ENCODE measurements at regions of chr6 and their contacts with region 1.

Region 1: GRCh38 chr6:188821-189655 is 103.2 kb upstream of the DUSP22 start:
- DNase-seq: peak; percentile 36 to 80 (median 61)
- ATAC-seq: peak; percentile 91
- H3K4me3 ChIP-seq: no peak overlapping the region
- H3K4me3 Mint-ChIP-seq: peak overlapping the region in 1 of 10 donors; percentile 52
- H3K27ac ChIP-seq: no peak overlapping the region
- H3K27ac Mint-ChIP-seq: peak overlapping the region in 2 of 9 donors; percentile 47 to 51
- H3K4me1 ChIP-seq: peaks cover 12 to 25% of the 10 kb centered on the region in 2 donors
- H3K4me1 Mint-ChIP-seq: peaks cover 16 to 38% (median 34%) of the 10 kb centered on the region in 7 donors
- H3K27me3 ChIP-seq: no peaks in the 10 kb centered on the region
- H3K27me3 Mint-ChIP-seq: no peaks in the 10 kb centered on the region

Region 2: GRCh38 chr6:322940-323729 is 134.1 kb after region 1 on chr6:
- CTCF ChIA-PET with region 1: interaction called, 3 read pairs
- POLR2A ChIA-PET with region 1: no interaction called
- intact Hi-C with region 1: loop called in 1 of 2 experiments (anchors 1 kb)
- DNase-seq: no peak
- ATAC-seq: no peak
- H3K4me3 ChIP-seq: no peak overlapping the region
- H3K4me3 Mint-ChIP-seq: no peak overlapping the region
- H3K27ac ChIP-seq: no peak overlapping the region
- H3K27ac Mint-ChIP-seq: no peak overlapping the region
- H3K4me1 ChIP-seq: no peaks in the 10 kb centered on the region
- H3K4me1 Mint-ChIP-seq: peaks cover 0 to 18% (median 7%) of the 10 kb centered on the region in 7 donors
- H3K27me3 ChIP-seq: no peaks in the 10 kb centered on the region
- H3K27me3 Mint-ChIP-seq: no peaks in the 10 kb centered on the region

Region 3: GRCh38 chr6:399785-400534 is 210.9 kb after region 1 on chr6:
- CTCF ChIA-PET with region 1: interaction called, 3 read pairs
- POLR2A ChIA-PET with region 1: interaction called, 4 read pairs
- intact Hi-C with region 1: loop called (anchors 1 kb)
- DNase-seq: peak in 7 of 9 donors; percentile 27 to 66 (median 60)
- ATAC-seq: peak; percentile 76
- H3K4me3 ChIP-seq: no peak overlapping the region
- H3K4me3 Mint-ChIP-seq: peak overlapping the region in 8 of 10 donors; percentile 32 to 78 (median 56)
- H3K27ac ChIP-seq: no peak overlapping the region
- H3K27ac Mint-ChIP-seq: peak overlapping the region; percentile 41 to 84 (median 77)
- H3K4me1 ChIP-seq: peaks cover 8 to 29% of the 10 kb centered on the region in 2 donors
- H3K4me1 Mint-ChIP-seq: peaks cover 19 to 92% (median 49%) of the 10 kb centered on the region in 7 donors
- H3K27me3 ChIP-seq: no peaks in the 10 kb centered on the region
- H3K27me3 Mint-ChIP-seq: no peaks in the 10 kb centered on the region

Region 4: DNA sequence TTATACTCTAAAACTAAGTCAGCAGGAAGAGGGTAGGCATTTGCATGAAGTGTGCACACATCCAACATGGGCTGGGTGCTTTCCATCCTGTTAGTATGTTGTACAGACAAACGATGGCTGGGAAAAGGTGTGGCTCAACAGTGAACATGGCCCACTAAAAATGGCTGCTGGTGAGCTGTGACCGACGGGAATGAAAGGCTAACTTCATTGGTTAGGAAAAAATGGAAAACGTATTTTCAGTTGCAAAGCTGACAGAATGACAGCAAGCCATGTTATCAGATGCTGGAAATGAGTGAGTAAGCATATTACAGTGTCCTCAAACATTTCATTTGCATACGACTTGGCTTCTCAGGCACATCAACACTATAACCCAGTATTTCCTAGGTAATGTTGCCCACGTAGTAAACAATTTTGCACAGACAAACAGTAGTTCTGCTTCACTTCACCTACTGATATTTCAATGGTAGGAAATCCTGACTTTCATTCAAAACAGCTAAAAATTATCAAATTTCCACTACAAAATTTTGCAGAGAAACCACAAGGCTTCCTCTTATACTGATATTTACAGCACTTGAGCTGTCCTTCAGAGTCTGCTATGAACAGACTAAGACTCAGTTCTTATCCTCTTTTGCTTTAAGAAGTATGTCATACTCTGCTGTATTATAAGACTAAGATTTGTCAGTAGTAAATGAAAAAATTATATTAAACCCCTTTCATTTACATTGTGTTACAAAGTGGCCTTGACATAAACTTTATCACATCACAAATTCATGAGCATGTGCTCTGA is 301.4 kb after region 1 on chr6:
- CTCF ChIA-PET with region 1: no interaction called
- POLR2A ChIA-PET with region 1: no interaction called
- intact Hi-C with region 1: loop called in 1 of 2 experiments (anchors 5 kb)
- DNase-seq: no peak
- ATAC-seq: peak; percentile 47
- H3K4me3 ChIP-seq: peak overlapping the region; percentile 25
- H3K4me3 Mint-ChIP-seq: peak overlapping the region; percentile 19 to 87 (median 70)
- H3K27ac ChIP-seq: no peak overlapping the region
- H3K27ac Mint-ChIP-seq: peak overlapping the region; percentile 54 to 98 (median 84)
- H3K4me1 ChIP-seq: peaks cover 60 to 65% of the 10 kb centered on the region in 2 donors
- H3K4me1 Mint-ChIP-seq: peaks cover 46 to 78% (median 70%) of the 10 kb centered on the region in 7 donors
- H3K27me3 ChIP-seq: no peaks in the 10 kb centered on the region
- H3K27me3 Mint-ChIP-seq: no peaks in the 10 kb centered on the region

Region 5: DNA sequence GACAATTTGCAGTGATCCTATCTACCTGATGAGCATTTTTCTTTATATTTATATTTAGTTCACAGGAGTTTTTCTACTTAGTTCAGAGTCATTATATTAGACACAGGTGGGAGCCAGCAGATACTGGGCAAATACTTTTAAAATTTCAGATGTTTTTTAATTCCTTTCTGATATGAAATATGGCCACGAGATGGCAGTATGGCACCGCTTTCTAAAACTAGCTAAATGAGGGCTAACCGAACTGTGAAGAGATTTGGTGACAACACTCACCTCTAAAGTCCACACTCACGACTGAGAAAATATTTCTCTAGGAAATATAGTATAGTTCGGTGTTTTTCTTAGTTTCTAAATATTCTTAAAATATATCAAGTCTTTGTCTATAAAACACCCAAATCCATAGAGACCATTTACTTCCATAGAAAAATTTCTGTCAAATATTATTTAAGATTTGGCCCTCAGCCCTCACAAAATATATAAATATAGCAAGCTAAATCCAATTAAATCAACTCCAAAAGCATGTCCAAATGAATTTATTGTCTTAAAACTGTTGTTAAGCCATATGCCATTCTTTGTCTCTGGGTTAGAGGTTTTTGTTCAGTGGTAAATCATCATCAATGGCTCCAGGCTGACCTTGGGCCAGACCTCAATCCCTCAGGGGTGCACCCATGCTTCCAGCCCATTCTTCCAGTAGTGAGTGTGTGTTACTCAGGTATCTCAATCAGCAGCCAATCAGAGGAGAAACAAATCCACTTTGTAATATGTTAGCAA is 404.3 kb after region 1 on chr6:
- CTCF ChIA-PET with region 1: interaction called, 11 read pairs
- POLR2A ChIA-PET with region 1: no interaction called
- intact Hi-C with region 1: loop called (anchors 1 kb)
- DNase-seq: peak; percentile 20 to 69 (median 62)
- ATAC-seq: peak; percentile 78
- H3K4me3 ChIP-seq: no peak overlapping the region
- H3K4me3 Mint-ChIP-seq: no peak overlapping the region
- H3K27ac ChIP-seq: no peak overlapping the region
- H3K27ac Mint-ChIP-seq: peak overlapping the region in 1 of 9 donors; percentile 44
- H3K4me1 ChIP-seq: no peaks in the 10 kb centered on the region
- H3K4me1 Mint-ChIP-seq: peaks cover 0 to 19% (median 0%) of the 10 kb centered on the region in 7 donors
- H3K27me3 ChIP-seq: no peaks in the 10 kb centered on the region
- H3K27me3 Mint-ChIP-seq: no peaks in the 10 kb centered on the region

Region 6: DNA sequence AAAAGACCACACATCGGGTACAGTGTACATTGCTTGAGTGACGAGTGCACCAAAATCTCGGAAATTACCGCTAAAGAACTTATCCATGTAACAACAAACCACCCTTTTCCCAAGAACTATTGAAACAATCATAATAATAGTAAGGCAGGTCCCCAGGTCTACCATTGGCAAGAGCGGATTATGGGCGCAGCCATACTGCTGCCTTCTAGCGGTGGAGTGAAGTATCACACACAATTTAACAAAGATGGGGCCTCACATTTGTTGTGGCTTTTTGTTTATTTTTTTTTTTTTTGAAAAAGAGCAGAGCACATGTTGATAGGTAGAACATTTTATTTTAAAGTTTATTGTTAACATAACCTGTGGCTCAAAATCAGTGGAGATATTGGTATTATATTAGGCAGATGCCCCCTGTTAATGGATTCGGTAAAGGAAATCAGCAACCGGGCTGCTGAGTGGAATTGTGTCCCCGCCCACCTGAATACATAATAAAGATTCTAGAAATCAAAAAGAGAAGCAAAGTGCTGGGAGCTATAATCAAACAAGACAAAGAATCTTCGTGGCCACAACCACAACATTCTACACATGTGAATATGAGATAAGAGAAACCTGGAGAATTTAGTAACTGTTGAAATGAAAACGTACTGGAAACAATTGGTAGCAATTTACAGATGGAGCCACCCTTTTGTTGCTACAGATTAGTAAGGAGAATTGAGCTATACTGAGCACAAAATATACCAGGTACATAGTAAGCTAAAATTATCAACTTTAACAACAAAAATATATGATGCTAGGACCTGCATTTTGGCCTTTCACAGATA is 598.1 kb after region 1 on chr6:
- CTCF ChIA-PET with region 1: no interaction called
- POLR2A ChIA-PET with region 1: no interaction called
- intact Hi-C with region 1: loop called in 1 of 2 experiments (anchors 5 kb)
- DNase-seq: no peak
- ATAC-seq: no peak
- H3K4me3 ChIP-seq: no peak overlapping the region
- H3K4me3 Mint-ChIP-seq: no peak overlapping the region
- H3K27ac ChIP-seq: no peak overlapping the region
- H3K27ac Mint-ChIP-seq: no peak overlapping the region
- H3K4me1 ChIP-seq: peaks cover 0 to 5% of the 10 kb centered on the region in 2 donors
- H3K4me1 Mint-ChIP-seq: peaks cover 1 to 20% (median 17%) of the 10 kb centered on the region in 7 donors
- H3K27me3 ChIP-seq: no peaks in the 10 kb centered on the region
- H3K27me3 Mint-ChIP-seq: peaks cover 3 to 15% (median 8%) of the 10 kb centered on the region in 5 donors

Region 7: DNA sequence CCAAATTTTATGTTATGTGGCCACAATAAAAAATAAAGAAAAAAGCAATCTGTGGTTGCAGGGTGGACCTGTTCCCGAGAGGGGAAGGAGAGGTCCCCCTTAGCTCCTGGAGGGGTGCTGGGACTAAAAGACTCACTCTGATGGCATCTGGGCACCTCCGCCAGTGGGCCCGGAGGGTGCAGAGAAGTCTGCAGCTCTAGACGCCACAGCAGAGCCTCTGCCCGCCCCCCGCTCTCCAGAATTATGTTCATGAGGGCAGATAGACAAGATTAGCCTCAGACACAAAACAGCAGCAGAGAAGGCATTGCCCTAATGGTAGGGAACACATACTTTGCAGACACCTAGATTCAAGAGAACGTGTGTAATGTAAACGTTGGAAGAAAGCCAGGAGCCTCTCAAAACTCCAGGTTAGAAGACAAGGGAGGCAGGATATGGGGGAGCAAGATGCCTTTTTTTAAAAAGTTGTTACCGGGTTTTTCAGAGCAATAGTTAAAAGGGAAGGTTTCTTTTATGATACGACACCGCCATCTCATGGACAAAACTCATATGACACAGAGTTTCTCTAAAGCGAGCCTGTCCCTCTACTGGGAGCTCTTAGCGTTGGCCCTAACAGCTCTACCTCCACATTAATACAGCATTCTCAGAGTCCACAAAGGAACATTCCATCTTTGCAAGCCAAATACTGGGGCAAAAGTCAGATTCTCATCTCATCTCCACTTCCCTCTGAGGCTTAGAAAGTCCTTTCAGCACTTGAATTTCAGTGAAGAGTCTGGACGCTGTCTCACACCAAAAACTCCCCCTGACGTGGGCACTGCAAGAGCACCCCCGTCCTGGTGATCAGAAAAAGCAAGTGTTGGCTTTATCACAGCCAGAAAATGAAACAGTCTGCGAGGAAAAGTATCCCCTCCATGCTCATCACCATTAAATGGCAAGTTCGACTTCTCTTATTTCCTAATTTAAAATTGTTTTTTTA is 1247.6 kb after region 1 on chr6:
- CTCF ChIA-PET with region 1: no interaction called
- POLR2A ChIA-PET with region 1: no interaction called
- intact Hi-C with region 1: loop called in 1 of 2 experiments (anchors 5 kb)
- DNase-seq: peak in 8 of 9 donors; percentile 24 to 66 (median 56)
- ATAC-seq: peak; percentile 83
- H3K4me3 ChIP-seq: no peak overlapping the region
- H3K4me3 Mint-ChIP-seq: no peak overlapping the region
- H3K27ac ChIP-seq: no peak overlapping the region
- H3K27ac Mint-ChIP-seq: no peak overlapping the region
- H3K4me1 ChIP-seq: no peaks in the 10 kb centered on the region
- H3K4me1 Mint-ChIP-seq: peaks cover 0 to 5% (median 0%) of the 10 kb centered on the region in 7 donors
- H3K27me3 ChIP-seq: no peaks in the 10 kb centered on the region
- H3K27me3 Mint-ChIP-seq: peaks cover 34 to 59% (median 47%) of the 10 kb centered on the region in 5 donors

Measured in naive thymus-derived CD4-positive, alpha-beta T cell (primary cell).